Activated CD8-positive, alpha-beta T cell treated with anti-CD3 and anti-CD28 coated beads for 36 hours (primary cell): ENCODE measurements at regions of chr17 and their contacts with region 1.

Region 1: DNA sequence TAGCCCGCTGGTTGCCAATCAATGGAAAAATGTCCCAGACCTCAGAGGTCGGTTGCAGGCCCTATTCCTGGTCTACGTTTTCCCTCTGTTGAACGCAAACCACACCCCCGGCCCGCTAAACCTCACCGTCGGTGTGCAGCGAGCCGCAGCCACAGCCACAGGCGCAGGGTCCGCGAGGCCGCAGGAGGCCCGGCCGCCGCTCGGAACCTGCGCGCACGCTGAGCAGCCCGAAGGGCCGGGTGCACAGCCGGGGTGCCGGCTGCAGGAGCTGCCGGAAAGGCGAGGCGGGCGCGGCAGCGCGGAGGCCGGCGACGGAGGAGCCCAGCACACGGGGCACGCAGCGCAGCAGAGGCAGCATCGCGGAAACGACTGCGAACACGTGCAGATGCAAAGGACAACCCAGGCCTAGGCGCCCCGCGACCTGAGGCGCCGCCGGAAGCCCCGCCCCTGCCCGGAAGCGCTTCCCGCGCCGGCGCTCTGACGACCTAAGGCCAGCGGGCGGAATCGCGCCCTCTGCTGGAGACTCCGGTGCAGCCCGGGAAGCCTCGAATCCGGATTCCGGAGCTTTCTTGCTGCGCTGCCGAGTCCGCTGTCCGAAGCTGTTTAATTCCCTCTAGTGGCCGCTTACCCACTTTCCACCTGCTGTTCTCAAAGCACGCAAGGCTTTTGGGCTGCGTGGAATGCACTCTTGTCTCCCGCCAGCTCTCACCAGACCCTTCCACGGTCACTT is at the start of gene C1QBP:
- DNase-seq: peak; percentile 95
- ATAC-seq: peak; percentile 97
- H3K4me3 Mint-ChIP-seq: peak within 1 kb of the TSS; percentile 81
- H3K27ac Mint-ChIP-seq: peak within 1 kb of the TSS; percentile 84
- H3K4me1 Mint-ChIP-seq: peaks cover 34% of the 10 kb centered on the region
- H3K27me3 Mint-ChIP-seq: no peaks in the 10 kb centered on the region
- CTCF ChIP-seq: peak; percentile 98
- total RNA-seq, gene C1QBP: 463 to 470 TPM

Region 2: GRCh38 chr17:5135726-5136579 is 302.9 kb before region 1 on chr17:
- CTCF ChIA-PET with region 1: no interaction called
- POLR2A ChIA-PET with region 1: no interaction called
- intact Hi-C with region 1: no loop called
- DNase-seq: no peak
- ATAC-seq: no peak
- H3K4me3 Mint-ChIP-seq: no peak overlapping the region
- H3K27ac Mint-ChIP-seq: no peak overlapping the region
- H3K4me1 Mint-ChIP-seq: no peaks in the 10 kb centered on the region
- H3K27me3 Mint-ChIP-seq: no peaks in the 10 kb centered on the region
- CTCF ChIP-seq: no peak

Region 3: DNA sequence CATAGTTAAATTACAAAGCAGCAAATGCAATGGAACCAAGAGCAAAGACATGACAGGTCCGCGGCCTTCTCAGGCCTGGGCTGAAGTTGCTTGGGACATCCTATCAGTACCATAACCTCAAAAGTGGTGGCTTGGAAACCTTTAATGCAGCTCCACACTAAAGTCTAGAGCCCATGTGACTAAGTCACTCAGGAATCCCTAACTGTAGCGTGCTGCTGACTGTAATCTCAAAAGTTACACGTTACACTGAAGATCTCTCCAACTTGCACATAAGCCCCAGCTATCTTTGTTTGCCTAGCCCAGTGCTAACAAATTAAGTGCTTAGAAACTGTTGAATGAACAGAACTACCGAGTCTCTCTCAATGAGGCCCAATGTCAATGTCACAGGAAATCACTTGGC is 47.2 kb before region 1 on chr17:
- CTCF ChIA-PET with region 1: interaction called, 17 read pairs
- POLR2A ChIA-PET with region 1: interaction called, 5 read pairs
- intact Hi-C with region 1: no loop called
- DNase-seq: no peak
- ATAC-seq: no peak
- H3K4me3 Mint-ChIP-seq: no peak overlapping the region
- H3K27ac Mint-ChIP-seq: no peak overlapping the region
- H3K4me1 Mint-ChIP-seq: peaks cover 7% of the 10 kb centered on the region
- H3K27me3 Mint-ChIP-seq: no peaks in the 10 kb centered on the region
- CTCF ChIP-seq: no peak

Region 4: GRCh38 chr17:5413682-5414081 is 25.2 kb before region 1 on chr17:
- CTCF ChIA-PET with region 1: interaction called, 43 read pairs
- POLR2A ChIA-PET with region 1: interaction called, 30 read pairs
- intact Hi-C with region 1: no loop called
- DNase-seq: no peak
- ATAC-seq: peak; percentile 55
- H3K4me3 Mint-ChIP-seq: no peak overlapping the region
- H3K27ac Mint-ChIP-seq: peak overlapping the region; percentile 50
- H3K4me1 Mint-ChIP-seq: peaks cover 53% of the 10 kb centered on the region
- H3K27me3 Mint-ChIP-seq: no peaks in the 10 kb centered on the region
- CTCF ChIP-seq: no peak

Region 5: DNA sequence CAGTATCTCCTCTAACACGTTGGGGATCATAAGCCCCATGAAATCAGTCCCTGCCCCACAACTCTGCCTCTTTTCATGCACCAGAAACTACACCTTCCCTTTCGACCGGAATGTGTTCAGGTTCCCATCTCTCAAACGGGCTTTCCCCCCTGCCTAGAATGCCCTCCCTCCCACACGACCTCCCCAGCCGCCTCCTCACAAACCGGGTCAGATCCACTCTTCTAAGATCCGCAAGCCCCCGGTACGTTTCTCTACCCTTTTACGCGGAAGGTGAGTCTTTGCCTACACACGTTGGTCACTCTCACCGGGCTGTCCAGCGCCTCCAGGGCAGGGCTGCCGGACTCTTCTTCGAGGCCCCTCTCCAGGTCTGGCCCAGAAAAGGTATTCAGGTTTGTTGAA is 29.2 kb after region 1 on chr17:
- CTCF ChIA-PET with region 1: interaction called, 21 read pairs
- POLR2A ChIA-PET with region 1: interaction called, 6 read pairs
- intact Hi-C with region 1: no loop called
- DNase-seq: peak; percentile 33
- ATAC-seq: peak; percentile 15
- H3K4me3 Mint-ChIP-seq: peak overlapping the region; percentile 89
- H3K27ac Mint-ChIP-seq: peak overlapping the region; percentile 74
- H3K4me1 Mint-ChIP-seq: peaks cover 40% of the 10 kb centered on the region
- H3K27me3 Mint-ChIP-seq: no peaks in the 10 kb centered on the region
- CTCF ChIP-seq: no peak

Region 6: GRCh38 chr17:5508810-5509209 is 69.9 kb after region 1 on chr17:
- CTCF ChIA-PET with region 1: no interaction called
- POLR2A ChIA-PET with region 1: no interaction called
- intact Hi-C with region 1: no loop called
- DNase-seq: no peak
- ATAC-seq: no peak
- H3K4me3 Mint-ChIP-seq: no peak overlapping the region
- H3K27ac Mint-ChIP-seq: no peak overlapping the region
- H3K4me1 Mint-ChIP-seq: peaks cover 19% of the 10 kb centered on the region
- H3K27me3 Mint-ChIP-seq: no peaks in the 10 kb centered on the region
- CTCF ChIP-seq: no peak